CD4-positive, alpha-beta T cell (primary cell): ENCODE measurements at regions of chrX and their contacts with region 1.

Region 1: GRCh38 chrX:48021026-48021900 is 14.5 kb downstream of the SPACA5 start:
- DNase-seq: peak; percentile 61 to 87 (median 76)
- ATAC-seq: peak; percentile 65
- H3K4me3 ChIP-seq: peak overlapping the region; percentile 77
- H3K4me3 Mint-ChIP-seq: peak overlapping the region; percentile 96
- H3K27ac ChIP-seq: peak overlapping the region; percentile 87 to 90
- H3K27ac Mint-ChIP-seq: peak overlapping the region; percentile 99
- H3K4me1 ChIP-seq: peaks cover 11% of the 10 kb centered on the region
- H3K4me1 Mint-ChIP-seq: peaks cover 20% of the 10 kb centered on the region
- H3K27me3 ChIP-seq: no peaks in the 10 kb centered on the region
- H3K27me3 Mint-ChIP-seq: no peaks in the 10 kb centered on the region
- CTCF ChIP-seq: no peak

Region 2: DNA sequence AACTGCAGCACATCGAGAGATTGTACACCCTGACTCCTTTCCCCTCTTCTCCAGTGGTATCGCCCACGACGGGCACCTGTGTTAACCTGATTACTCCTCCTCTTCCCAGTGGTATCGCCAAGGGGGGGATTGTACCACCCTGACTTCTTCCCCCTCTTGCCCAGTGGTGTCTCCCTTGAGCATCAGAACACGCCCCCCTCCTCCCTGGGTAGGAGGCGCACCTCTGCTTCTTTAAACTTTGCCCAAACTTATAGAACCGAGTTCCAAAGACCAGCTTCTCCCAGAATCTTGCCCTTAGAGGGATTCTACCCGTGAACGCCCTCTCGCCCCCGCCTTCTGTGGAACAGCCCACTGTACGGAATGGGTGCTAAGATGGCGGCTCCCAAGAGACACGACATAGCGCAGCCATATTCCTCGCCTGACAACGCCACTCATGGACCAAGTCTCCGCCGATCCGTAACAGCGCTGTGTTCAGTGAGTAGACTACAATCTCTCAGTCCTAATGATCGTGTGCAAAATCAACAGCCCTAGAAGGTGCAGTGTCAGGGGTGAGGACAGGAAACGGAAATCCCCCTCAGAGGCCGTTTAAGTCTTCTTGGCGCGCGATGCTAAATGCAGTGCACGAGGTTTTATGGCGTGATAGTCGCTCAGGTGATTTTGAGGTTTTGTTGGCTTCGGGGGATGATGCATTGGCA is 655.1 kb before region 1 on chrX:
- CTCF ChIA-PET with region 1: no interaction called
- POLR2A ChIA-PET with region 1: no interaction called
- intact Hi-C with region 1: loop called in 1 of 2 experiments (anchors 5 kb)
- DNase-seq: peak; percentile 53 to 90 (median 66)
- ATAC-seq: peak; percentile 88
- H3K4me3 ChIP-seq: peak overlapping the region; percentile 64
- H3K4me3 Mint-ChIP-seq: peak overlapping the region; percentile 90
- H3K27ac ChIP-seq: peak overlapping the region; percentile 48 to 59
- H3K27ac Mint-ChIP-seq: peak overlapping the region; percentile 87
- H3K4me1 ChIP-seq: peaks cover 22% of the 10 kb centered on the region
- H3K4me1 Mint-ChIP-seq: peaks cover 30% of the 10 kb centered on the region
- H3K27me3 ChIP-seq: no peaks in the 10 kb centered on the region
- H3K27me3 Mint-ChIP-seq: no peaks in the 10 kb centered on the region
- CTCF ChIP-seq: no peak

Region 3: DNA sequence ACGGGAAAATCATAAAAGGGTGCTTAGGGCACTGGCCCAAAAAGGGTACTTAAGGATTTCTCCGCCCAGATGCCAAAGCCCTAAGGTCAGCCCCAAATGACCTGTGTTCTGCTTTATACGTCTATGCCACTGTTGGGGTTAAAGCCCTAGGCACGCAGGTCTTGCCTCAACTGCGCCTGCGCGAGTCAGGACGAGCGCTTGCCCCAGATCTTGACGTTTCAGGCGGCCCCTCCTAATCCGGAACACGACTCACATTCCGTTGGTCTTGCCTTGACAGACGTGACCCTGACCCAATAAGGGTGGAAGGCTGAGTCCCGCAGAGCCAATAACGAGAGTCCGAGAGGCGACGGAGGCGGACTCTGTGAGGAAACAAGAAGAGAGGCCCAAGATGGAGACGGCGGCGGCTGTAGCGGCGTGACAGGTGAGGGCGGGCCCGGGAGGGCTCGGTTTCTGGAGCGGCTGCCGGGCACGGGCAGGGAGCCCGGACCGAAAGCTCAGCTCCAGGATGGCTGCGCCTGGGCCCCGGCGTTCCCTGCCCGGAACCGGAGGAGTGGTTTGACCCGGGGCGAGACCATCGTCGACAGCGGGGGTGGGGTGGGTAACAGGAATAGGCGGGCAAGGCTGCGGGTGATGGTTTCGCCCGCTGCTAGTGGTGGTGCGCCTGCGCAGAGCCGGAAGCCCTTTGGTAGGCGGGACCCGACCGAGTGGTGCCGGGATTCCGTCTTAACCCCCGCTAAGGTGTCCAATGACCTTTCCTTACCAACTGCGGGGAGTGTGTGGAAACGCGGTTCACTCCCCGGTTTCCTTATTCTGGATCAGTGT is 460.2 kb before region 1 on chrX and contains the start of gene ARAF:
- CTCF ChIA-PET with region 1: no interaction called
- POLR2A ChIA-PET with region 1: no interaction called
- intact Hi-C with region 1: loop called in 1 of 2 experiments (anchors 5 kb)
- DNase-seq: peak; percentile 85 to 99 (median 92)
- ATAC-seq: peak; percentile 86
- H3K4me3 ChIP-seq: peak within 1 kb of the TSS; percentile 85
- H3K4me3 Mint-ChIP-seq: peak within 1 kb of the TSS; percentile 95
- H3K27ac ChIP-seq: peak within 1 kb of the TSS; percentile 79 to 96
- H3K27ac Mint-ChIP-seq: peak within 1 kb of the TSS; percentile 96
- H3K4me1 ChIP-seq: peaks cover 40% of the 10 kb centered on the region
- H3K4me1 Mint-ChIP-seq: peaks cover 51% of the 10 kb centered on the region
- H3K27me3 ChIP-seq: no peaks in the 10 kb centered on the region
- H3K27me3 Mint-ChIP-seq: no peaks in the 10 kb centered on the region
- CTCF ChIP-seq: no peak
- total RNA-seq, gene ARAF: 119 to 121 TPM

Region 4: DNA sequence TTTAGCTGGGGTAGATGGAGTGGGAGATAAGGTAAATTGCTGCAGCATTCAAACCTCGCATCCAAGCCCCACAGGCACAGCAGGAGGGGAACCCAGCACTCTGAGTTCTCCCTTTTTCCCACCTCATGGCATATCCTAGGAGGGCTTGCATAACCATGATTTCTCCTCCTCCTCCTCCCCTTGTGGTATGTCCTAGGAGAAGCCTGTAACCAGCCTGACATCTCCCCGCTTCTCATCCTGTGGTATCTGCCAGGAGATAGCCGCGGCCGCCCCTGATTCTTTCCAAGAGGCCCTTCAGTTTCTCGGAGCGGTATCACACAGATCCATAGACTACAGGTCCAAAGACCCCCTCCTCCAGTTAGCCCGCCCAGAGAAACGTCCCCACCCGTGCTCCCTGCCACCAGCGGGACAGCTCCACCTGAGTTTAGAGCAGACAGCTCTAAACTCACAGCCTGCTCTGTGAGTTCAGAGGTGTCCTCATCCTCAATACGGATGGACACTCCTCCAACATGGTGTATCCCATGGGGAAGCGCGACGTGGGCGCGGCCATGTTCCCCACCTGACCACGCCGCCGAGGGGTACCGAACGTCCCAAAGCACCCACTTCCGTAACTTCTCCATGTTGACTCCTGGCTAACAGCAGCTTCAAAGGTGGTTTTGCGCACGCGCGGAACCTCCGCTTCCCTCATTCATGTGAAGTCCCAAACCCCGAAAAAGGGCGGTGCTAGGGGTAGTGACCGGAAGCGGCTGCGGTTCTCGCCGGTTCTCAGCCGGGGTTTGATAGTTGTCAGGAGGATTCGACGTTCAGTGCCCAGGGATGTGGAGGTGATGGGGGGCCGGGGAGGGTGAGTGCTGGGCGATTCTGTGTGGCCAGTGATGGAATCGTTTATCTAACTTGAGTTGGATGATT is 184.8 kb before region 1 on chrX and contains the start of gene ZNF81:
- CTCF ChIA-PET with region 1: interaction called, 3 read pairs
- POLR2A ChIA-PET with region 1: interaction called, 9 read pairs
- intact Hi-C with region 1: loop called (anchors 1 kb)
- DNase-seq: peak; percentile 80 to 95 (median 88)
- ATAC-seq: peak; percentile 96
- H3K4me3 ChIP-seq: peak within 1 kb of the TSS; percentile 77
- H3K4me3 Mint-ChIP-seq: peak within 1 kb of the TSS; percentile 99
- H3K27ac ChIP-seq: peak within 1 kb of the TSS; percentile 22 to 52
- H3K27ac Mint-ChIP-seq: peak within 1 kb of the TSS; percentile 97
- H3K4me1 ChIP-seq: peaks cover 10% of the 10 kb centered on the region
- H3K4me1 Mint-ChIP-seq: peaks cover 37% of the 10 kb centered on the region
- H3K27me3 ChIP-seq: no peaks in the 10 kb centered on the region
- H3K27me3 Mint-ChIP-seq: no peaks in the 10 kb centered on the region
- CTCF ChIP-seq: no peak
- total RNA-seq, gene ZNF81: 5.1 to 5.7 TPM

Region 5: GRCh38 chrX:47958761-47959342 is 62.4 kb before region 1 on chrX:
- CTCF ChIA-PET with region 1: no interaction called
- POLR2A ChIA-PET with region 1: interaction called, 3 read pairs
- intact Hi-C with region 1: loop called in 1 of 2 experiments (anchors 1 kb)
- DNase-seq: peak in 7 of 14 experiments; percentile 1 to 59 (median 39)
- ATAC-seq: peak; percentile 70
- H3K4me3 ChIP-seq: no peak overlapping the region
- H3K4me3 Mint-ChIP-seq: no peak overlapping the region
- H3K27ac ChIP-seq: no peak overlapping the region
- H3K27ac Mint-ChIP-seq: no peak overlapping the region
- H3K4me1 ChIP-seq: peaks cover 4% of the 10 kb centered on the region
- H3K4me1 Mint-ChIP-seq: no peaks in the 10 kb centered on the region
- H3K27me3 ChIP-seq: no peaks in the 10 kb centered on the region
- H3K27me3 Mint-ChIP-seq: no peaks in the 10 kb centered on the region
- CTCF ChIP-seq: peak; percentile 34